Right ventricle myocardium inferior (tissue), 1 donor: ENCODE measurements at regions of chr10 and their contacts with region 1.

Region 1: GRCh38 chr10:79068562-79069324 is at the start of gene ZMIZ1:
- DNase-seq: peak; percentile 95
- ATAC-seq: peak; percentile 40
- total RNA-seq, gene ZMIZ1: 48.8 TPM

Region 2: DNA sequence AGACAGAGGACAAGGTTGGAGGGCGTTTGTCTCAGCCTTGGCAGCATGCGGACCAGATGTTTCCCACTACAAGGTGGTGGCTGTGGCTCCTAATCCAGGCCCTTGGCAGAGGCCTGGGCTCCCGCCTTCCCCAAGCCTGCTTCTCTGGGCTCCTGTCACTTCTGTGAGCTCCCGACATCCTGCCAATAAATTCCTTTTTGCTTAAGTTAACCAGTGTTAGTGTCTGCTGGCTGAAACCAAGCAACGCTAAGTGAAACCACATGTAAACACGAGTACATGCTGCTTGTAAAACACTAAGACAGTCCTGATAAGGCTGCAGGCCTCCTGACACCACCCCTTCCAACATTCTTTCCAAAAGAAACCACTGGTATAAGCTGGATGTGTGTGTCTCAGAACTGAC is 263.6 kb before region 1 on chr10:
- intact Hi-C with region 1: loop called (anchors 10 kb)
- DNase-seq: peak; percentile 87
- ATAC-seq: peak; percentile 93

Region 3: DNA sequence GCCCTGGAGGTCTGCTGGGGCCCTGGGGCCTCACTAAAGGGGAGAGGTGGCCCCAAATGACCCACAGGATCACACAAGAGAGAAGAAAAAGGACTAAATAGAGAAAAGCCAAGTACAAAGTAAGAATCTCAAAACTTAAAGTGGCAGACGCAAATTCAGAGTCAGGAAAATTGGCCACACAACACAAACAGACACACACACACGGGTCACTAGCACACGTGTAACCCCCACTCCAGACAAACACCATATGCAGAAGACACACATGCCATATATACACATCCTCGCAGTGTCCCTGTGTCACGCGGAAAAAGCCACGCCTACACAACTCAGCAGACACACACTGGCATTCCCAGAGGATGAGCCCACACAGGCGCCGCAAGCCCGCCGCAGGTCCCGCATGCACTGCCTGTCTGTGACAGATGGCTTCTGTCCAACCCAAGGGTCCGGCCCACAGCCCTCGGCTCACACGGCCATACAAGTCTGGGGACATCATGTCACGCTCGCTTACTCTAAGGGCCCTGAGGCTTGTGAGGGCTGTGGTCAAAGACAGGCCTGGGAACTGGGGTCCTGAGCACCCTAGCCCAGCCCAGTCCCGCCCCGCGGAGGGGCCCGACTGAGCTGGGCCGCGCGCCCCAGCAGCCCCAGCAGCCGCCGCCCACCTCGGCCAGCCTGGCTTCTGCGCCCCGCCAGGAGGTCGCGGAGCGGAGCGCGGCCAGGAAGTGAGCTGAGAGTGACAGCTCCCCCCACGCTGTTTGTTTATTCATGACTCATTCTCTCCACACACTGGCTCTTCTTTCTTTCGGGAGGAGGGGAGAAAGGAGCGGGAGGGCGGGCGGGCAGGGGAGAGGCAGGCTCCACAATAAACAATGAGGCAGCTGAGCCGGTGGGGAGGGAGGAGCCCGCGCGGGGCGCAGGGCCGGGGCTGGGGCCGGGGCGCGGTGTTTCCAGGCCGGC is 95.5 kb before region 1 on chr10:
- intact Hi-C with region 1: loop called (anchors 1 kb)
- DNase-seq: peak; percentile 85
- ATAC-seq: peak; percentile 72

Region 4: GRCh38 chr10:79112881-79113431 is 44.2 kb after region 1 on chr10:
- intact Hi-C with region 1: loop called (anchors 2 kb)
- DNase-seq: no peak
- ATAC-seq: peak; percentile 70